B cell (primary cell): ENCODE measurements at regions of chr2 and their contacts with region 1.

Region 1: GRCh38 chr2:173402405-173402974 is 47.8 kb downstream of the CDCA7 start:
- DNase-seq: peak; percentile 80
- ATAC-seq: peak; percentile 88
- H3K4me3 ChIP-seq: no peak overlapping the region
- H3K4me3 Mint-ChIP-seq: no peak overlapping the region
- H3K27ac ChIP-seq: no peak overlapping the region
- H3K27ac Mint-ChIP-seq: no peak overlapping the region
- H3K4me1 ChIP-seq: peaks cover 6 to 8% of the 10 kb centered on the region in 2 donors
- H3K4me1 Mint-ChIP-seq: peaks cover 4% of the 10 kb centered on the region
- H3K27me3 ChIP-seq: peaks cover 0 to 40% (median 35%) of the 10 kb centered on the region in 4 experiments
- H3K27me3 Mint-ChIP-seq: peaks cover 58% of the 10 kb centered on the region
- CTCF ChIP-seq: peak; percentile 84

Region 2: GRCh38 chr2:173027181-173028128 is 375.0 kb before region 1 on chr2:
- CTCF ChIA-PET with region 1: interaction called, 12 read pairs
- POLR2A ChIA-PET with region 1: no interaction called
- intact Hi-C with region 1: loop called (anchors 1 kb)
- DNase-seq: peak; percentile 81
- ATAC-seq: peak; percentile 74
- H3K4me3 ChIP-seq: no peak overlapping the region
- H3K4me3 Mint-ChIP-seq: no peak overlapping the region
- H3K27ac ChIP-seq: no peak overlapping the region
- H3K27ac Mint-ChIP-seq: no peak overlapping the region
- H3K4me1 ChIP-seq: peaks cover 4 to 8% of the 10 kb centered on the region in 2 donors
- H3K4me1 Mint-ChIP-seq: peaks cover 1% of the 10 kb centered on the region
- H3K27me3 ChIP-seq: peaks cover 0 to 3% (median 0%) of the 10 kb centered on the region in 4 experiments
- H3K27me3 Mint-ChIP-seq: peaks cover 16% of the 10 kb centered on the region
- CTCF ChIP-seq: peak; percentile 94

Region 3: DNA sequence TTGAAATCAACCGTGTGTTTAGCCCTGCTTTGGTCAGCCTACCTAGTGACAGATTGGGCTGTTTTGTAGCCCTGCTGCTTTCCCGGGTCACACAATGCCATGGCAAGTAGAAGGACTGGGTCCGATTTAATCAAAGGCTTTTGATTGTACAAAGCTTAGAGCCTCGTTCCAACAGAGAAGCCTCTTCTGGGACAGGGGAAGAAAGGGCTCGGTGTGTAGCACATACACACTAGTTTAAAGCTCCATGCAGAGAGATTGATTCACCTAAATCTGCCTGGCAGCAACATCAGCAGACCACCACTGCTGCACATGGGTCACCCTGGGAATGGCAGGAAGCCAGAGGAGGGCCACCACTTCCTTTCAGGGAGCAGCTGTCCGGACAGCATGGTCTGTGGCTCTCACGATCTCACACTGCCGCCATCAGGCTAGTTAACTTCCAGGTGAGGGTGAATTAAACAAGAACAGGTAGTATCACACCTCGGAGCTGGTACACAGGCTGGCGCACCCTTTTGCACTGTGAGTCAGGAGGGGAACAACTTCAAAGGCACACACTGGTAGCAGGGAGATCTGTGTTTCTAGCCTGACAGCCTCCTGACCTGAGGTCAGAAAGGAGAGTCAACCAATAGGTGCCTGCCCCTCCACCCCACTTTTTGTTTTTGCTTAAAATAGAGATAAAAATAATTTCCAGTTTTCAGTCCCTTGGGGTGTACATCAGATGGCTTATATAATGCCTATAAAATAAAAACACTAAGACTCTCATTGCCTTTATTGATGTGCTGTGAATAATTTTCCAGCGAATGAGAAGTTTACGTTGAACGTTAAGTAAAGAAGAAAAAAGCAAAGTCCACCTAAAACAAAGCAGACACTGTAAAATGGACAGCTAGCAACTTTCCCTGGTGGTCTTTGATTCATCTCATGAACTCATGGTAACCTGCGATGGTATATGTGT is 60.7 kb after region 1 on chr2:
- CTCF ChIA-PET with region 1: no interaction called
- POLR2A ChIA-PET with region 1: no interaction called
- intact Hi-C with region 1: no loop called
- DNase-seq: no peak
- ATAC-seq: no peak
- H3K4me3 ChIP-seq: no peak overlapping the region
- H3K4me3 Mint-ChIP-seq: no peak overlapping the region
- H3K27ac ChIP-seq: no peak overlapping the region
- H3K27ac Mint-ChIP-seq: no peak overlapping the region
- H3K4me1 ChIP-seq: no peaks in the 10 kb centered on the region
- H3K4me1 Mint-ChIP-seq: no peaks in the 10 kb centered on the region
- H3K27me3 ChIP-seq: no peaks in the 10 kb centered on the region
- H3K27me3 Mint-ChIP-seq: peaks cover 35% of the 10 kb centered on the region
- CTCF ChIP-seq: no peak

Region 4: DNA sequence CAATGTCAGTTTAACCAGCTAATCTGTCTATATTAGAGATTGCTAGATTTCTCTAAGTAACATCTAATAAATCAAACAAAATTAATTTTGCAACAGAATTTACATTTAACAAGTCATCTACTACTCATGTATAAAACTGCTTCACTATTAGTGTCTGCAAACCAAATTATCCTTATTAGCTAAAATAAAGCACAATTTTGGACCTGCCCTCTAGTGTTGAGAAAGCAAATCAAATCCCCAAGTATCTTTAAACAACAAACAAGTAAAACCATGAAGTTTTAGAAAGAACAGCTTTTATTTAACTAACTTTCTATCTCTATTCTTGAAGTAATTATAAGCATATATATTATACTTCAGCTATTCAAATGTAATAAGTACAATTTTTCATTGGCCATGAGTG is 675.8 kb after region 1 on chr2:
- CTCF ChIA-PET with region 1: interaction called, 20 read pairs
- POLR2A ChIA-PET with region 1: no interaction called
- intact Hi-C with region 1: loop called (anchors 2 kb)
- DNase-seq: peak; percentile 22
- ATAC-seq: no peak
- H3K4me3 ChIP-seq: no peak overlapping the region
- H3K4me3 Mint-ChIP-seq: no peak overlapping the region
- H3K27ac ChIP-seq: no peak overlapping the region
- H3K27ac Mint-ChIP-seq: no peak overlapping the region
- H3K4me1 ChIP-seq: no peaks in the 10 kb centered on the region
- H3K4me1 Mint-ChIP-seq: no peaks in the 10 kb centered on the region
- H3K27me3 ChIP-seq: no peaks in the 10 kb centered on the region
- H3K27me3 Mint-ChIP-seq: no peaks in the 10 kb centered on the region
- CTCF ChIP-seq: peak; percentile 65

Region 5: DNA sequence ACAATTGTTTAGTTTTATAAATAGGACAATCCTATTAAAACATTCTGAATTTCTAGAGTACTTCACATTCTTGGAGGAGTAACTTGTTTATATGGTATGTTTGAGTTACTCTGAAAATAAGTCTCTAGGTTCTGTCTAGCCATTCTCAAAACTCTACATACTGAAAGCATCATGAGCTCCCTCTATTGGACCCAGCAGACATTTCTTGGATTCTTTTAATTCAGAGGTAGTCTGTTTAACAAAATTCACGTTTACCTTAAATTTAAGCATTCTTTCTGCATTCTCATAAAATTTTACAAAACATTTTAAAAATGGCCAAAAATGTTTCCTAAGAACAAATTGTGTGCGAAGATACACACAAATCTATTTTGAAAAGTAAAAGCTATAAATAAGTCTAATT is 947.5 kb after region 1 on chr2:
- CTCF ChIA-PET with region 1: interaction called, 151 read pairs
- POLR2A ChIA-PET with region 1: no interaction called
- intact Hi-C with region 1: no loop called
- DNase-seq: no peak
- ATAC-seq: no peak
- H3K4me3 ChIP-seq: no peak overlapping the region
- H3K4me3 Mint-ChIP-seq: no peak overlapping the region
- H3K27ac ChIP-seq: no peak overlapping the region
- H3K27ac Mint-ChIP-seq: no peak overlapping the region
- H3K4me1 ChIP-seq: no peaks in the 10 kb centered on the region
- H3K4me1 Mint-ChIP-seq: no peaks in the 10 kb centered on the region
- H3K27me3 ChIP-seq: peaks cover 0 to 6% (median 4%) of the 10 kb centered on the region in 4 experiments
- H3K27me3 Mint-ChIP-seq: peaks cover 12% of the 10 kb centered on the region
- CTCF ChIP-seq: no peak